Dendritic cell treated with granulocyte-macrophage colony-stimulating factor and Interleukin-4, amounts not matched to agents 40 ng/mL and 50 ng/mL, for 4 days (primary cell): ENCODE measurements at regions of chr15 and their contacts with region 1.

Region 1: GRCh38 chr15:89130201-89130600 is 41.9 kb downstream of the ABHD2 start:
- H3K4me3 Mint-ChIP-seq: no peak overlapping the region
- H3K27ac Mint-ChIP-seq: no peak overlapping the region
- H3K4me1 Mint-ChIP-seq: peaks cover 34% of the 10 kb centered on the region
- H3K27me3 Mint-ChIP-seq: no peaks in the 10 kb centered on the region

Region 2: DNA sequence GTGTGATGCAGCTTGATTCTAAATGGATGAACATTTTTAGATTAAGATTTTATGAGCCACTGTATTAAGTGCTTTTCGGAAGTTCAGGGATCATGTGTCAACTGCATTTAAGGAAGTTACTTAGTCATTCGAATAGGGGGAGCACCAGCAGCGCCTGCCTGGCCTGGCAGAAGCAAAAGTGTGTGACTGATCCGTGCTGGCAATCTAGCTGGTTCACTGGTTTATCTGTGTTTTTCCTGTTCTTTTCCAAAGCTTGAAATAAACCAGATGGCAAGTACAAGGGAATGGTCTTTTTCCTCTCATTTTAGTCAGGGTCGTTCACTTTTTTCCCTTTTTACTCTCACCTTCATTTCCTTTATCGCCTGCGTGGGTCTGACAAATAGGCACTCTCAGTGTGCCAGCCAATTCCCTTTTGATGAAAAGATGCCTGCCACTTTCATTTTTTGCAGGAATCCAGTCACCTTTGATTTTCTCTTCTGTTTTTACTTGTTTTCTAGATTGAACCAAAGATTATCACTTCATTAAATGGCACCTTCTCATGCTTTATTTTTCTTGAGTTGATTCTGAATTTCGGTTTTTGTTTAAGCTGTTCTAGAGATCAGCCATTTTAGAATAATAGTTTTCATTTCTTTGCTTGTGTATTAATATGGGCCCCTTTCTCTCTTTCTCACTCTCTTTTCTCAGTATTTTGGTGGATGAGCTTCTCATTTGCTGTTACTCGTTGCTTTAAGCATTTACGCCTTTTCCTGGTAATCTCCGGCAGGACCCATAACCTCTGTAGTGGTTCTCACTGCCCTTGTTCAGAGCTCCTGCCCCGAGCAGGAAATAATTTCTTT is 39.2 kb before region 1 on chr15:
- intact Hi-C with region 1: loop called (anchors 2 kb)
- H3K4me3 Mint-ChIP-seq: peak overlapping the region; percentile 71
- H3K27ac Mint-ChIP-seq: no peak overlapping the region
- H3K4me1 Mint-ChIP-seq: peaks cover 67% of the 10 kb centered on the region
- H3K27me3 Mint-ChIP-seq: no peaks in the 10 kb centered on the region

Region 3: DNA sequence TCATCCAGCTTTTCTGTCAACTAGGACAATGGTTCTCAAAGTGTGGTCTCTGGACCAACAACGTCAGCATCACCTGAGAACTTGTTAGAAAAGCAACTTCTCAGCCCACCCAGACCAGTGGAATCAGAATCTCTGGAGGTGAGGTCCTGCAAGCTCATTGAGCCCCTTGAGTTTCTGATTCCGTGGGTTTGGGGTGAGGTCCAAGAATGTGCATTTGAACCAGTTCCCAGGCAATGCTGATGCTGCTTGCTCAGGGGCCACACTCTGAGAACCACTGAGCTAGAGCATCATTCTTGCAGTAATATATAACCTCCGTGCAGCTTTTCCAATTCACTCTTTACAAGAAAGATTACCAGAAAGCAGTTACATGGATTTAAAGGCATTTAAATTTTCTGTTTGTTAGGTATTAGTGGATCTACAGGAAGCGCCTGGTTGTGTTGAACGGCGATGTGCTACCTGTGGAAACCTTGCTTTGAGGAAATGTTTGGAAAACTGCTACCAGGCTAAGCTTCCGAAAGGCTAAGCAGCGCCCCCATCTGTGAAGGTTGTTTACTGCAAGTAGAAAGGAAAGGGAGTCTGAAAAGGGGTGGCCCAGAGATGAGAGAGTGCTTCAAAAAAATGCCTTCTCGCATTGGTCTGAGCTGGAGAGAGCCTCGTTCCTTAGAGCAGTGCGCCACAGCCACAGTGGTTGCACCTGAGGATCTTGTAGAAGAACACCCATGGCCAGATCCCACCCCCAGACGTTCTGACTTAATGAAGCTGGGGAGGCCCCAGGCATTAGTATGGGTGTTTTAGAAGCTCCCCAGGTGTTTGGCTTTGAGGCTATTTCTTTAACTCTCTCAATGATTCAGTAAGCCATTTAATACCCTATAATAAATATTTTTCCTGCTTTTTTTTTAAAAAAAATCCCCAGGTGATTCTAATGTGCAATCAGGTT is 41.2 kb after region 1 on chr15:
- intact Hi-C with region 1: loop called (anchors 5 kb)
- H3K4me3 Mint-ChIP-seq: no peak overlapping the region
- H3K27ac Mint-ChIP-seq: no peak overlapping the region
- H3K4me1 Mint-ChIP-seq: peaks cover 16% of the 10 kb centered on the region
- H3K27me3 Mint-ChIP-seq: no peaks in the 10 kb centered on the region